PC-9 (cell line): ENCODE measurements at regions of chr7 and their contacts with region 1.

Region 1: GRCh38 chr7:76069238-76069638 is 21.3 kb downstream of the MDH2 start:
- DNase-seq: peak; percentile 81 to 93
- H3K4me3 ChIP-seq: no peak overlapping the region
- H3K27ac ChIP-seq: no peak overlapping the region
- H3K4me1 ChIP-seq: peaks cover 11% of the 10 kb centered on the region
- H3K27me3 ChIP-seq: no peaks in the 10 kb centered on the region
- CTCF ChIP-seq: peak; percentile 70

Region 2: GRCh38 chr7:76054128-76055120 is 14.8 kb before region 1 on chr7:
- CTCF ChIA-PET with region 1: interaction called, 3 read pairs
- POLR2A ChIA-PET with region 1: interaction called, 14 read pairs
- intact Hi-C with region 1: no loop called
- DNase-seq: peak; percentile 77 to 95
- H3K4me3 ChIP-seq: no peak overlapping the region
- H3K27ac ChIP-seq: 0 out of 2 replicates have a peak overlapping the region, but pooled peaks have one; percentile 14
- H3K4me1 ChIP-seq: peaks cover 30% of the 10 kb centered on the region
- H3K27me3 ChIP-seq: no peaks in the 10 kb centered on the region
- CTCF ChIP-seq: no peak

Region 3: DNA sequence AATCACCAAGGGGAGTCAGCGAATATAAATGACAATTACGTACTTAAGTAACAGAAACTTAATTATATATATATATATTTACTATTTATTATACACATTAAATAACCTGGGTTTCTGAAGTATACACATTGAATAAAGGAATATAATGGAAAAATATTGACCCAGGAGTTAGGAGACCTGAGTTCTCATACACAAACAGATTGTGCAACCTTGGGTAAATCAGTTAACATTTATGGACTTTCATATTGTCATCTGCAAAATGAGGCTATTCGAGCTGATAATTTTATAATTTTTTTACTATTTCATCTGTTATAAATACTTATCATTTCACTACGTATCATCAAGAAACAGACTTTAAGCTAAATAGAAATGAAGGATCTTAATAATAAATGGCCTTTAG is 57.4 kb after region 1 on chr7:
- CTCF ChIA-PET with region 1: interaction called, 10 read pairs
- POLR2A ChIA-PET with region 1: interaction called, 4 read pairs
- intact Hi-C with region 1: loop called (anchors 1 kb)
- DNase-seq: no peak
- H3K4me3 ChIP-seq: no peak overlapping the region
- H3K27ac ChIP-seq: no peak overlapping the region
- H3K4me1 ChIP-seq: peaks cover 16% of the 10 kb centered on the region
- H3K27me3 ChIP-seq: no peaks in the 10 kb centered on the region
- CTCF ChIP-seq: no peak

Region 4: DNA sequence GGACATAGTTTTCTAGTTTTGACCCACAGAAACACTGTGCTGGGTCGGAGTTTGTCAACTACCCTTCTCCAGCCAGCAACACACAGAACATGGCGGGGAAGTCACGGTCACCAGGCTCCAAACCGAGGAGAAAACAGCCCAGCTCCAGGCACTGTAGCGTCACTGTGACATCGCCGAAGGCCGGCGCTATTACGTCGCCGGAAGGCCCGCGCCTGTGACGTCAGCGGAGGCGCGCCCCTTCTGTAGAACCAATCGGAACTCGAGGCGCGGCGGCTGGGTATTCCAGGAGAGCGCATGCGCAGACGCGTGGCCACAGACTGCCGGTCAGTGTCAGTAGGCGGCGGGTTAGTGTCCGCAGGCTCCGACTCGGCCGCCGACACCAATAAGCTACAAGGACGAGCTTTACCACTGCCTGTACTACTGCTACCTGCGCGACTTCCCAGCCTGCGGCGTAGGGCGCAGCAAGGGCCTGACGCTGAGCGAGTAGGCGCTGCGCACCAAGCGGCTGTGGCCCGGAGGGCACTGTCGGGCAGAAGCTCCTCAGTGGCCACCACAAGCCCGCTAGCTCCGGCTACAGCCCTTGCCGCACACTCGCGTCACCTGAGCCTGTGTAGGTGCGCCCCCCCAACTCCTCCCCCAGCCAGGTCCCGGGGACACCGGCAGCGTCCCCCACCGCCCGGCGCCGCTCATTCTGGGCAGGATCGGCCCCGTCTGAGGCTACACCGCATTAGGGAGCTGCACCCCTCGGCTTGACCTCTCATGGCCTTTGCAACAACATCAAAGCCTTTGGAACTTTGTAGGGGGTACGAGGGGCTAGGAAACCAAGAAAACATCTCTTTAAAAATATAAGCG is 97.4 kb after region 1 on chr7:
- CTCF ChIA-PET with region 1: interaction called, 20 read pairs
- POLR2A ChIA-PET with region 1: no interaction called
- intact Hi-C with region 1: loop called (anchors 1 kb)
- DNase-seq: peak; percentile 90 to 99
- H3K4me3 ChIP-seq: peak overlapping the region; percentile 73
- H3K27ac ChIP-seq: peak overlapping the region; percentile 75
- H3K4me1 ChIP-seq: 0 out of 2 replicates have a peak, but pooled peaks cover 4% of the 10 kb centered on the region
- H3K27me3 ChIP-seq: no peaks in the 10 kb centered on the region
- CTCF ChIP-seq: peak; percentile 30; the same call in 1 of the 2 replicates